Activated T-helper 1 cell treated with anti-CD3 and anti-CD28 coated beads, Interleukin-12 subunit alpha, Interleukin-12 subunit beta, Interleukin-2, Interleukin-4 antibody, amounts not matched to agents 30 ng/mL and 10 ng/mL and 1 ng/mL, durations not matched to agents 14 hours and 24 hours and 36 hours (primary cell): ENCODE measurements at regions of chr12 and their contacts with region 1.

Region 1: GRCh38 chr12:80763874-80764273 is 47.2 kb downstream of the MYF5 start:
- DNase-seq: no peak
- H3K4me3 Mint-ChIP-seq: no peak overlapping the region
- H3K27ac Mint-ChIP-seq: no peak overlapping the region
- H3K4me1 Mint-ChIP-seq: no peaks in the 10 kb centered on the region
- H3K27me3 Mint-ChIP-seq: peaks cover 4% of the 10 kb centered on the region

Region 2: GRCh38 chr12:80412369-80412953 is 351.4 kb before region 1 on chr12:
- intact Hi-C with region 1: loop called (anchors 1 kb)
- DNase-seq: no peak
- H3K4me3 Mint-ChIP-seq: no peak overlapping the region
- H3K27ac Mint-ChIP-seq: no peak overlapping the region
- H3K4me1 Mint-ChIP-seq: no peaks in the 10 kb centered on the region
- H3K27me3 Mint-ChIP-seq: no peaks in the 10 kb centered on the region

Region 3: GRCh38 chr12:80472902-80473500 is 290.9 kb before region 1 on chr12:
- intact Hi-C with region 1: loop called (anchors 5 kb)
- DNase-seq: no peak
- H3K4me3 Mint-ChIP-seq: no peak overlapping the region
- H3K27ac Mint-ChIP-seq: no peak overlapping the region
- H3K4me1 Mint-ChIP-seq: no peaks in the 10 kb centered on the region
- H3K27me3 Mint-ChIP-seq: no peaks in the 10 kb centered on the region

Region 4: GRCh38 chr12:80692114-80692513 is 71.8 kb before region 1 on chr12:
- intact Hi-C with region 1: no loop called
- DNase-seq: no peak
- H3K4me3 Mint-ChIP-seq: no peak overlapping the region
- H3K27ac Mint-ChIP-seq: no peak overlapping the region
- H3K4me1 Mint-ChIP-seq: no peaks in the 10 kb centered on the region
- H3K27me3 Mint-ChIP-seq: no peaks in the 10 kb centered on the region

Region 5: GRCh38 chr12:80778005-80778541 is 14.2 kb after region 1 on chr12:
- intact Hi-C with region 1: loop called (anchors 2 kb)
- DNase-seq: peak; percentile 19
- H3K4me3 Mint-ChIP-seq: no peak overlapping the region
- H3K27ac Mint-ChIP-seq: peak overlapping the region; percentile 31
- H3K4me1 Mint-ChIP-seq: peaks cover 13% of the 10 kb centered on the region
- H3K27me3 Mint-ChIP-seq: no peaks in the 10 kb centered on the region

Region 6: GRCh38 chr12:80877721-80878265 is 113.9 kb after region 1 on chr12:
- intact Hi-C with region 1: no loop called
- DNase-seq: no peak
- H3K4me3 Mint-ChIP-seq: no peak overlapping the region
- H3K27ac Mint-ChIP-seq: no peak overlapping the region
- H3K4me1 Mint-ChIP-seq: no peaks in the 10 kb centered on the region
- H3K27me3 Mint-ChIP-seq: no peaks in the 10 kb centered on the region